Right ventricle myocardium superior (tissue), 1 donor: ENCODE measurements at regions of chr11 and their contacts with region 1.

Region 1: GRCh38 chr11:9015677-9016076 is 11.9 kb upstream of the NRIP3 start:
- DNase-seq: peak; percentile 51
- ATAC-seq: peak; percentile 88

Region 2: DNA sequence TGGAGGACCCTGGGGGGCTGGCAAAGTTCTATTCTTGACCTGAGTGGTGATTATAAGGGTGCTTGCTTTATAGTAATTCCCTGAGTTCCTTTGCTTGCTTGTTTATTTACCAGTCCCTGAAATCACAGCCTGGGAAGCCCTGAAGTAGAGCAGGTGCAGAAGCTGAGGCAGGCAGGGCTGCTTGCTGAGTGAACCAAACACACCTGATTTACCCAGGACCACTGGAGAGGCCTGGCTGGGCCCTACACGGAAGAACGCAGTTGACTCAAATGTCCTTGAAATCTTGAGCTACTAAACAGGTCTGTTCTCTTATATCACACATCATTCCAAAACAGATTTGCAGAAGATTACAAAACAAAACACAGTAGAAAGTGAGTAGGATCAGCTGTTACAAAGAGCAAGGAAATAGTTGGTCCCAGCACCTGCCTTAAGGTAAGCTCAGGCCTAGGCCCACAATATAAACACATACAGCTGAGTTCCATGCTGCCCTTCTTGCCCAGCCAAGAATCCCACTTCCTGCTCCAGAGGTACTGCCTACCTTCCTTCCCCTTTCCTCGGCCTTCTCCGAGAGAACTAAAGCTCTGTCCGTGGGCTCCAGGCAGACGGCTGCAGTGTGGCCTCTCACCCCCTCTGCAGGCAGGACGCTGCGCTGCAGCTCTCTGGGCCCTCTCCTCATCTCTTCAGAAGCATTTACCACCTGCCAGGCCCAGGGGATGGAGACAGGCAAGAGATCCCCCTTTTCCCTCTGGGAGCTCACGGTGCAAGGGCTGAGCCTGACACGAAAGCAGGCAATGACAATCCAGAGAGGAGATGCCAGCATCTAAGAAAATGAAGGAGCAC is 121.8 kb after region 1 on chr11:
- intact Hi-C with region 1: loop called (anchors 2 kb)
- DNase-seq: peak; percentile 81
- ATAC-seq: peak; percentile 94

Region 3: DNA sequence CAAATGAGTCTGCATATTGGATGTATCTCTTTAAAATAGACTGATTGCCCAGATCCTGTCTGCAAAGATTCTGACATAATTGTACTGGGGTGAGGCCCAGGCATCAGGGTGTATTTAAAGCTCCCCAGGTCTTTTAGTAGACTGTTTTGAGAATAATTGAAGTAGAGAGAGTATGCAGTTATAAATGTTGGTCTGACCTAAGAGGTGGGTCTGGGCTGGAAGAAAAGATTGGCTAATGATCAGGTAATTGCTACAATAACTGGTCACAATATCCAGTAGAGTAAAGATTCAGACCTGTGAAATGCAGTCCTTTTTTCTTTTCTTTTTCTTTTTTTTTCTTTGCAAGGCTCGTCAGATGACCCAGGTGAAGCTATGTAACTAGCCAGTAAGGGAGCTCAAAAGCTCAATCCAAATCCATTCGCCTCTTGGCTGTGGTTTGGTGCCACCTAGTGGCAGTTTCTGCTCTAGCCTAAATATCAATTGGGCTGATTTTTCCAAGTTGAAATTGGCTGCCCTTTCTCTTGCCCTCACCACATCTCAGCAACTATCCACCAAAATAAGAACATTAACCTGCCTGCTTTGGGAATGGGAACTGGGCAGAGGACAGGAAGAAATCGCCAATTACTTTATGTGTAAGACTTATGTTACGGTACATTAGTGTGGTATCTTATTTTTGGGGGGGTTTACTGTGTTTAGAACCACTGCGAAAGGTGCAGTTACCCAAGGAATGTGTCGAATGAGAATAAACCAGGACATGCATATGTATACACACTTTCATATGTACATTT is 491.0 kb after region 1 on chr11:
- intact Hi-C with region 1: loop called (anchors 10 kb)
- DNase-seq: peak; percentile 69
- ATAC-seq: peak; percentile 90